Right lobe of liver (tissue), 6 donors: ENCODE measurements at regions of chr18 and their contacts with region 1.

Region 1: DNA sequence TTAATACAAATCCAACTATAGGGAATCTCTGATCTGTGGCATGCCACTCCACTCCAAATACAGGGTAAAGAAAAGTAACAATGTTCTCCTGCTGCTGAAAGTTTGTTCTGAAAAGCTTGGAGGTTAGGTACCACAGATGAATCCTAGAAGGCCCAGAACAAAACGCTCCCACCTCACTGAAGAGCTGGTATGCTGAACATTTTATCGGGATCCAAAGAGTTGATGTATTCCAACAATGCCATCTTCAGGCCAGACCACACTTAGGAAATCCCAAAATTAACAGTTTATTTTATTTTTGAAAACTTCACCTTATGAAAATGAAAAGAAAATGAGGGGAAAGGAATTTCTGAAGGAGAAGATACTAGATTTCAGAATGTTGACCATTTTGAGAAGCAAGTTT is 145.1 kb upstream of the CDH19 start:
- DNase-seq: no peak
- ATAC-seq: peak; percentile 76 to 84 (median 80)
- H3K4me3 ChIP-seq: no peak overlapping the region
- H3K27ac ChIP-seq: no peak overlapping the region
- H3K4me1 ChIP-seq: no peaks in the 10 kb centered on the region
- H3K27me3 ChIP-seq: no peaks in the 10 kb centered on the region
- CTCF ChIP-seq: peak; percentile 35 to 54 (median 50)
- POLR2A ChIP-seq: no peak

Region 2: DNA sequence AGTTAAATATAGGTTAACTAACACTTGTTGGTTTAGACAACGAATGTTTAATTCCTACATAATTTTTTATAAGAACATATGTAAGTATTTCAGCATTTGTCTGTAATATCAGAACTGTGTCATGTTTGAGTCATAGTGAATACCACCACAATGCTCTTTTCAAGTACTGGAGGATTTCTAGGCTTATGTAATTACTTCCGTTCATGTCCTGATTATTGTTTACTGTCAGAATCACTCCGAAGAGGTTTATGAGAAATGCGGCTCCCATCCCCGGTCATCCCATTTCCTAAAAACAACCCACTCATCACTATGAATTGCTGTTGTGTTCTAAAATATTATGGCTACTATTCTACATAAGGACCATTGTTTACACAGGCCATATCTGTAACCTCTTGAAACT is 190.3 kb before region 1 on chr18:
- intact Hi-C with region 1: loop called in 1 of 2 experiments (anchors 10 kb)
- DNase-seq: no peak
- ATAC-seq: no peak
- H3K4me3 ChIP-seq: no peak overlapping the region
- H3K27ac ChIP-seq: no peak overlapping the region
- H3K4me1 ChIP-seq: no peaks in the 10 kb centered on the region
- H3K27me3 ChIP-seq: peaks cover 0 to 5% of the 10 kb centered on the region in 2 donors
- CTCF ChIP-seq: no peak
- POLR2A ChIP-seq: no peak

Region 3: GRCh38 chr18:66694852-66695251 is 54.2 kb before region 1 on chr18:
- intact Hi-C with region 1: no loop called
- DNase-seq: no peak
- ATAC-seq: no peak
- H3K4me3 ChIP-seq: no peak overlapping the region
- H3K27ac ChIP-seq: no peak overlapping the region
- H3K4me1 ChIP-seq: no peaks in the 10 kb centered on the region
- H3K27me3 ChIP-seq: no peaks in the 10 kb centered on the region
- CTCF ChIP-seq: no peak
- POLR2A ChIP-seq: no peak